Activated CD4-positive, alpha-beta T cell treated with anti-CD3 and anti-CD28 coated beads, Interleukin-2, amount 10 ng/mL, durations not matched to agents 7 days and 5 days (primary cell): ENCODE measurements at regions of chr5 and their contacts with region 1.

Region 1: DNA sequence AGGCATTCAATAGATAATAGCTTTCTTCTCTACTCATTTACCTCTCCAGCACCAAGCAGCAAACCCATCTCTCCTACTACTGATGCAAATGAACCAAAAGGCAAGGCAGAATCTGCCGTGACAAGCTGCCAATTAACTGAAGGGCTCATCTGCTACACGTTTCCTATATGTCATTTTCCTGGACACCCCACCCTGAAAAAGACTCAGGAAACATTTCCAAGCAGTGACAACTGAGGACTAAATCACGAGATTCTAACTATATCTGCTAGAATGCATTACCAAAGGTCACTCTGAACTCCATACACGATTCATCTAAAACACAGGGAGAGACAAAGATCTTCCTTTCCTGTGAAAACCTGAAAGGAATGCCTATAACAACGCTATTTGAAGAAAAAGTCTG is 12.9 kb downstream of the PLPP1 start:
- DNase-seq: no peak
- H3K4me3 Mint-ChIP-seq: no peak overlapping the region
- H3K27ac Mint-ChIP-seq: no peak overlapping the region
- H3K4me1 Mint-ChIP-seq: peaks cover 4% of the 10 kb centered on the region
- H3K27me3 Mint-ChIP-seq: no peaks in the 10 kb centered on the region

Region 2: DNA sequence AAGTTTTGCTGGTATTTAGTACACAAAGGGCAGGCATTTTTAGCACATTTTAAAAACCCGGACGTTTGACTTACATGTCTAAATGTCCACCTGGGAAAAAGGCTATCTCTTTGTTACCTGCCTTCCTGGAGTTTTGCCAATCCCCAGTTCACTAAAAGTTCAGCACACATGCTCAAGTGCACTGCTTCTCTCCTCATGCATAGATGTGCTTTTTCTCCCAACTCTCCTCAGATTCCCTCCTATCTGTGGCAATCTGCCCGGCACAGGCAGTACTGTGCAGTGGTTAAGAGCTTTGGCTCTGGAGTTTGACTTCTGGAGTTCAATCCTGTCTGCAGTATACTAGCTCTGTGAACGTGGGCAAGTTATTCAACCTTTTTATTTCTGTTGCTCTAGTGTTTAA is 280.1 kb before region 1 on chr5:
- CTCF ChIA-PET with region 1: no interaction called
- POLR2A ChIA-PET with region 1: no interaction called
- DNase-seq: no peak
- H3K4me3 Mint-ChIP-seq: no peak overlapping the region
- H3K27ac Mint-ChIP-seq: no peak overlapping the region
- H3K4me1 Mint-ChIP-seq: no peaks in the 10 kb centered on the region
- H3K27me3 Mint-ChIP-seq: peaks cover 40% of the 10 kb centered on the region

Region 3: DNA sequence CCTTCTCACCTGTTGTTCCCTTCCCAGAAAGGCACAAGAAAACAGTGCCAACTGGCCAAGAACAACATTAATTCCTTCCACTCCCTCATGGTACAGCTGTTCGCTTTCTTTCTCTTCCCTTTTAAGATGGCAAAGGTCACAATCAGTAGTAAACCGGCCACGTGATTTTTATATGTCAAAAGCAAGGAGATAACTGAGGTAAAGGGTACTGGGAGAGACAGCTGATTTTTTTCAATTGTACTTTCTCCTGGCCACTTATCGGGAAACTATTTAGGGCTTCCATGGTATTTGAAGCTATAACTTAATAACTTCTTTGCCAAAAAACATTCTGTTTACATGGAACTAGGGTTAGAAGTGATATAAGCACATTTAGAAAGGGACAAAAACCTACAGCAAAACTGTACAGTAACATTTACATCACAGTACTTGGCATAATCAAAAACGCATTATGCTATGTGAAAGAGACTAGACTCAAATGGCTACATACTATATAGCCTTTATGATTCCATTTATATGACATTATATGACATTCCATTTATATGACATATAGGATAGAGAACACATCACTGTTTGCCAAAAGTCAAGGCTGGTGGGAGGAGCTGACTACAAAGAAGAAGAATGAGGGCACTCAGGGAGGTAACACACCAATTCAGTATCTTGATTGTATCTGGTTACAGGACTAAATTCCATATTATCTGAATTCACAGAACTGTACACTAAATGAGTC is 11.9 kb before region 1 on chr5:
- CTCF ChIA-PET with region 1: interaction called, 12 read pairs
- POLR2A ChIA-PET with region 1: no interaction called
- DNase-seq: no peak
- H3K4me3 Mint-ChIP-seq: no peak overlapping the region
- H3K27ac Mint-ChIP-seq: no peak overlapping the region
- H3K4me1 Mint-ChIP-seq: peaks cover 14% of the 10 kb centered on the region
- H3K27me3 Mint-ChIP-seq: no peaks in the 10 kb centered on the region